ENCODE measurements at regions of chr6 and their contacts with region 1.

Region 1: DNA sequence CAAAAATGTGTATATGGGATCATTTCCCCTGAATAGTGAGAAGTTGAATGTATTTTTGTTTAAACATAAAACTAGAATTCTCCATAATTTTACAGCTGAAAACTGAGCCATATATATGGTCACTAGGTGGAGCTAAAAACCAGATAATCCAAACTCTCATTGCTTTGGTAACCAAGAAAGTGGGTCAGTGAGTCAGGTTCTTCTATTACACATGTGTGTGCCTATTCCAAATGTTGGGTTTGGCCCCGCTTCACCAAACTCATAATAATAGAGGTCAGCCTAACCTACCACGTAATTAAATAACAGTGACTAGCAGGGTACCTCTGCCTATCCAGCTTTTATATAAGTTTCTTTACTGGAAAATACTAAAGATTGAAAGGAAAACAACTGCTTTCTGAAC is 19.3 kb upstream of the RNGTT start:
- DNase-seq: no peak
- H3K4me3 ChIP-seq: no peak overlapping the region
- H3K27ac ChIP-seq: no peak overlapping the region
- H3K4me1 ChIP-seq: peaks cover 0 to 2% (median 0%) of the 10 kb centered on the region in 4 experiments; a peak in 1 of 7 replicates
- H3K27me3 ChIP-seq: peaks cover 0 to 1% (median 0%) of the 10 kb centered on the region in 4 experiments; a peak in 2 of 7 replicates
- CTCF ChIP-seq: peak in 2 of 3 experiments; percentile 56 to 67; a peak in 3 of 4 replicates
- EP300 ChIP-seq: no peak
- POLR2A ChIP-seq: no peak
- RAD21 ChIP-seq: peak; percentile 86 to 89

Region 2: GRCh38 chr6:88890860-88891845 is 91.6 kb before region 1 on chr6:
- CTCF ChIA-PET with region 1: no interaction called
- POLR2A ChIA-PET with region 1: no interaction called
- DNase-seq: no peak
- H3K4me3 ChIP-seq: no peak overlapping the region
- H3K27ac ChIP-seq: no peak overlapping the region
- H3K4me1 ChIP-seq: peaks cover 0 to 2% (median 0%) of the 10 kb centered on the region in 4 experiments; a peak in 1 of 7 replicates
- H3K27me3 ChIP-seq: no peaks in the 10 kb centered on the region
- CTCF ChIP-seq: no peak
- EP300 ChIP-seq: no peak
- POLR2A ChIP-seq: no peak
- RAD21 ChIP-seq: no peak

Region 3: DNA sequence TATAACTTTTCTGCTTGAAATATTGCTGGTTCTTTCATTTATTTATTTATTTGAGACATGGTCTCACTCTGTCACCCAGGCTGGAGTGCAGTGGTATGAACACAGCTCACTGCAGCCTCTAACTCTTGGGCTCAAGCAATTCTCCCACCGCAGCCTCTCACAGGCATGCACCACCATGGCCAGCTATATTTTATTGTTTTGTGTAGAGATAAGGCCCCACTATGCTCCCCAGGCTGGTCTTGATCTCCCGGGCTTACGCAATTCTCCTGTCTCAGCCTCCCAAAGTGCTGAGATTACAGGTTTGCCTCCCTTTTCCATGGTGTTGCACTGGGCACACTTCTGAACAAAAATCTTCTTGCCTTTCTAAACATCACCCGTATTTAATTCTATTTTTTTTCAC is 19.8 kb after region 1 on chr6:
- CTCF ChIA-PET with region 1: interaction called, 18 read pairs
- POLR2A ChIA-PET with region 1: no interaction called
- DNase-seq: no peak
- H3K4me3 ChIP-seq: no peak overlapping the region
- H3K27ac ChIP-seq: no peak overlapping the region
- H3K4me1 ChIP-seq: peaks cover 0 to 7% (median 4%) of the 10 kb centered on the region in 4 experiments; a peak in 4 of 7 replicates
- H3K27me3 ChIP-seq: no peaks in the 10 kb centered on the region
- CTCF ChIP-seq: no peak
- EP300 ChIP-seq: no peak
- POLR2A ChIP-seq: no peak
- RAD21 ChIP-seq: no peak

Region 4: GRCh38 chr6:89066940-89067646 is 84.4 kb after region 1 on chr6:
- CTCF ChIA-PET with region 1: interaction called, 14 read pairs
- POLR2A ChIA-PET with region 1: no interaction called
- DNase-seq: no peak
- H3K4me3 ChIP-seq: no peak overlapping the region
- H3K27ac ChIP-seq: no peak overlapping the region
- H3K4me1 ChIP-seq: no peaks in the 10 kb centered on the region
- H3K27me3 ChIP-seq: no peaks in the 10 kb centered on the region
- CTCF ChIP-seq: no peak
- EP300 ChIP-seq: no peak
- POLR2A ChIP-seq: no peak
- RAD21 ChIP-seq: no peak

Region 5: DNA sequence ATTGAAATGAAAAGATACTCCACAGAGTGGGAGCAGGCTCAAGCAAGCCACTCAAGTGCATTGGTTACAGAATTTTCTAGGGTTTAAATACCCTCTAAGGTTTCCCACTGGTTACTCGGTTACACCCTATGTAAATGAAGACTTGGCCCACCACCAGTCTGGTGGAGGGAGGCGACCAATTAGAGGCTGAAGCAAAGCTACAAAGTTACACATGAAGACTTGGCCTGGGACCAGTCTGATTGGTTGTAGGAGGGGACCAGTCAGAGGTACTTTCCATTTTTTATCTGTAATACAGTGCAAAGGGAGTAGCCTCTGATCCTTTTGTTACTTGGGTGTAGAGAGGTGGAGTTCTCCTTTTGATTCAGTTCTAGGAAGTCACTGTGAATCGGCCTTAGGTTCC is 127.6 kb after region 1 on chr6:
- CTCF ChIA-PET with region 1: interaction called, 43 read pairs
- POLR2A ChIA-PET with region 1: no interaction called
- DNase-seq: no peak
- H3K4me3 ChIP-seq: no peak overlapping the region
- H3K27ac ChIP-seq: no peak overlapping the region
- H3K4me1 ChIP-seq: no peaks in the 10 kb centered on the region
- H3K27me3 ChIP-seq: no peaks in the 10 kb centered on the region
- CTCF ChIP-seq: no peak
- EP300 ChIP-seq: no peak
- POLR2A ChIP-seq: no peak
- RAD21 ChIP-seq: no peak

Region 6: GRCh38 chr6:89140347-89141156 is 157.8 kb after region 1 on chr6:
- CTCF ChIA-PET with region 1: interaction called, 36 read pairs
- POLR2A ChIA-PET with region 1: no interaction called
- DNase-seq: no peak
- H3K4me3 ChIP-seq: no peak overlapping the region
- H3K27ac ChIP-seq: no peak overlapping the region
- H3K4me1 ChIP-seq: 0 out of 7 replicates have a peak, but pooled peaks cover 0 to 1% (median 0%) of the 10 kb centered on the region in 4 experiments
- H3K27me3 ChIP-seq: peaks cover 7 to 20% (median 15%) of the 10 kb centered on the region in 4 experiments
- CTCF ChIP-seq: no peak
- EP300 ChIP-seq: no peak
- POLR2A ChIP-seq: no peak
- RAD21 ChIP-seq: no peak

Region 7: GRCh38 chr6:89242574-89243330 is 260.0 kb after region 1 on chr6:
- CTCF ChIA-PET with region 1: interaction called, 18 read pairs
- POLR2A ChIA-PET with region 1: no interaction called
- DNase-seq: peak in 1 of 2 experiments; percentile 34
- H3K4me3 ChIP-seq: peak overlapping the region in 1 of 4 experiments; percentile 24; a peak in 2 of 8 replicates
- H3K27ac ChIP-seq: no peak overlapping the region
- H3K4me1 ChIP-seq: peaks cover 0 to 3% (median under 1%) of the 10 kb centered on the region in 4 experiments; a peak in 3 of 7 replicates
- H3K27me3 ChIP-seq: peaks cover 0 to 5% (median 3%) of the 10 kb centered on the region in 4 experiments; a peak in 5 of 7 replicates
- CTCF ChIP-seq: peak in 2 of 3 experiments; percentile 18 to 20; a peak in 2 of 4 replicates
- EP300 ChIP-seq: no peak
- POLR2A ChIP-seq: no peak
- RAD21 ChIP-seq: peak; percentile 54 to 58